ENCODE measurements at regions of chr4 and their contacts with region 1.

Region 1: DNA sequence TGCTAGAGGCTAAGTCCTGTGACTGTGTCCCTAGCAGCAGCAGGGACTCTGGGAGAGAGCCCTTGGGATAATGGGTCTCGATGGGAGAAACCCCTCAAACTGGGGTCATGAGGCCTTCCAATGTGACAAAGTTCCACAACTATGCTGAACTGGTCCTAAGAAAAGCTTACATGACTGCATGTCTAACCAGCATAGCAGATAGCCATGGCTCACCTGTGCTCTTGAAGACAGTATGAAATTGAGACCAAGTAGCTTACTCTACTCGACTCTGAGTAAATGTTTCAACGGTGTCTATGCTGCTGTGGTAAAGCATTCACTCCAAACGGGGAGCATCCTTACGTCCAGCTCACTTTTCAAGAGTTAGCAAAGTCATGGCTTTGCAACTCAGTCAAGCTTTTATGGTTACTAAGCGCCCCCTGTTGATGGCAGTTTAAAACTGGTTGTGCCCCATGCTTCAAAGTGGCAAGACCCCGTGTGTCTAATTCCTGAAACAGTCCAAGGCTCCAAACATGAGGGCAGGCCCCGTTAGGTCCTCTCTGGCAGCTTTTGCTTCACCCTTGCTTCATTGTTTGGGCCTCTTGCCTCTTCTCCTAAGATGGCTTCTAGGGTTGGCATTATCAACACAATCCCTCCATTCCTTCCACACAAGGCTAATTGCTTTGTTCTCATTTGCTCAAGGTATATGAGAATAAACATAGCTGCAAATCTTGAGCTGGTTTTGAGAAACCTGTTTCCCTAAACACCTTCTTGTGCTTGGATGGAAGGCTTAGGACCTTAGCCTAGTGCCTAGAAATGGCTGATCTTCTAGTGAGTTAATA is 46.6 kb downstream of the CCNG2 start:
- DNase-seq: no peak

Region 2: GRCh38 chr4:77044461-77045150 is 159.0 kb before region 1 on chr4:
- intact Hi-C with region 1: loop called (anchors 5 kb)
- DNase-seq: no peak

Region 3: GRCh38 chr4:77095101-77095821 is 108.3 kb before region 1 on chr4:
- intact Hi-C with region 1: loop called (anchors 5 kb)
- DNase-seq: peak; percentile 87

Measured in cardiac septum (tissue), 1 donor.